ENCODE measurements at regions of chr7 and their contacts with region 1.

Region 1: GRCh38 chr7:22559829-22560489 is 60.0 kb upstream of the STEAP1B start:
- DNase-seq: peak; percentile 71
- CTCF ChIP-seq: peak; percentile 82

Region 2: DNA sequence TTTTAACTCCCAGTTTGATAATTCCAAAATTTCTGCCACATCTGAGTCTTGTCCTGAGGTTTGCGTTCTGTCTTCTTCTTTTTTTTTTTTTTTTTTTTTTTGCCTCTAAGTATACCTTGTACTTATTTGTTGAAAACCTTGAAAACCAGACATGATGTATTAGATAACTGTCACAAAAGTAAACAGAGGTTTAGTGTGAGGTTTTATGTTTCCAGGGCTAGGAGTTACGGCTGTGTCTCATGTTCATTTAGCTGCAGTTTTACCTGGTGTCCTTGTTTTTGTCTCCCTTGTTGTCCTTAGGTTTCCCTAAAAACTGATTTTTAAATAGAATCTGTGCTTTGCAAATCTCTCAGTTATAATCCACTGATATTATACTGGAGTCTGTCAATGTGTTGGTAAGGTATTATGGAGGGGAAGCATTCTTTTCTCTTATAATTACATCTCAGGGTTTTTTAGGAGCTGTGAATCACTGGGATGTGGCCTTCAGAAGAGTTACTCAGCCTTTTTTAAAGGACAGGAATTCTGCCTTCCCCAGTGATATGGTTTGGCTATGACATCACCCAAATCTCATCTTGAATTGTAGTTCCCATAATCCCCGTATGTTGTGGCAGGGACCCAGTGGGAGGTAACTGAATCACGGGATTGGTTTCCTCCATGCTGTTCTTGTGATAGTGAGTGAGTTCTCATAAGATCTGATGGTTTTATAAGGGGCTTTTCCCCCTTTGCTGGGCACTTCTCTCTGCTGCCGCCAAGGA is 709.3 kb before region 1 on chr7:
- in situ Hi-C with region 1: no loop called
- DNase-seq: no peak
- CTCF ChIP-seq: no peak

Region 3: DNA sequence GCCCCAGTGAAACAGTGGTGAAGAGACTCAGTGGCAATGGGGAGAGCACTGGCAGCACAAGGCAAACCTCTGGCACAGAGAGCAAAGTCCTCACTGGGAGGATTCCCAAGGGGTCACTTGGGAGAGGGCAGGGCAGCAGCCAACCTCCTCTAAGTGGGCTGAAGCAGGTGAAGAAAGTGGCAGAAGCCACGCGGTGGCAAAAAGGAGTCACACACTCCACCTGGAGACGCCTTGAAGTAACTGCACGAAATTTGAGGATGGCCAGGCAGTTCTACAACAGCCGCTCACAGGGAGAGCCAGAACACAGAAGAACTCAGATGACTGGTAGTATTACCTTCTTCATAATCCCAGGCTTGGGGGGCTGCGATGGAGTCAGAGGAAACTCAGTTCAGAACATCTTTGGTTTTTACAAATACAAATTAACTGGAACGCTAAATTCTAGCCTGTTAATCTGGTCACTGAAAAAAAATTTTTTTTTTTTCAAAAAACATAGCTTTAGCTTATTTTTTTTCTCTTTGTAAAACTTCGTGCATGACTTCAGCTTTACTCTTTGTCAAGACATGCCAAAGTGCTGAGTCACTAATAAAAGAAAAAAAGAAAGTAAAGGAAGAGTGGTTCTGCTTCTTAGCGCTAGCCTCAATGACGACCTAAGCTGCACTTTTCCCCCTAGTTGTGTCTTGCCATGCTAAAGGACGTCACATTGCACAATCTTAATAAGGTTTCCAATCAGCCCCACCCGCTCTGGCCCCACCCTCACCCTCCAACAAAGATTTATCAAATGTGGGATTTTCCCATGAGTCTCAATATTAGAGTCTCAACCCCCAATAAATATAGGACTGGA is 166.6 kb after region 1 on chr7:
- in situ Hi-C with region 1: loop called (anchors 5 kb)
- DNase-seq: peak; percentile 78
- CTCF ChIP-seq: peak; percentile 63

Region 4: DNA sequence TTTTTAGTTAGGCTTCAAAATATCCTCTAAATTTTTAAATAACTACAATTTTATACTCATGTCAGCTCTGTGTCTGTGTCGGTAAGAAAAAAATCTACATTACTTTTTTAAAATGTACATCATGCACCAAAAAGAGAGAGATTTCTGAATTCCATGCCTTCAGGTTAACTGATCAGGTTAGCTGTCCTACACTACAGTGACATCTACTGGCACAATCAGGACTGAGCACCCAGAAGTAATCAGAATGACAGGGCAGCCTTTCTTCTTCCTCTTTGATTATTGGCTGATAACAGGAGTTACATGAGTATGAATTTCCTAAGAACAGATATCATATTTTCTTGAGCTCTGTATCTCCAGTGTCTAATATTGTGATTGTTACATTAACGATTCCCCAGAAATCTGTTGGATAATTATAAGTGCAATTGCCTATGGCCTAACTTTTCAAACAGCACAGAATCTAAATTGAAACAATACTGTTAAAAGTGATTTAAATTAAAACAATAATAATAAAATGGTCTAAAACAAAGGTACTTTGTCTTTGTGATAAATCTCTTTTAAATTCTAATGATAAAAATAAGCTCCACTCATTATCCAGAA is 495.7 kb after region 1 on chr7:
- in situ Hi-C with region 1: loop called (anchors 10 kb)
- DNase-seq: peak; percentile 62
- CTCF ChIP-seq: peak; percentile 76